Activated CD4-positive, alpha-beta T cell treated with anti-CD3 and anti-CD28 coated beads for 36 hours (primary cell): ENCODE measurements at regions of chr5 and their contacts with region 1.

Region 1: GRCh38 chr5:40223884-40224402 is 455.8 kb upstream of the PTGER4 start:
- DNase-seq: peak; percentile 63
- ATAC-seq: peak; percentile 87
- H3K4me3 Mint-ChIP-seq: peak overlapping the region; percentile 50
- H3K27ac Mint-ChIP-seq: peak overlapping the region; percentile 94
- H3K4me1 Mint-ChIP-seq: peaks cover 64% of the 10 kb centered on the region
- H3K27me3 Mint-ChIP-seq: no peaks in the 10 kb centered on the region

Region 2: DNA sequence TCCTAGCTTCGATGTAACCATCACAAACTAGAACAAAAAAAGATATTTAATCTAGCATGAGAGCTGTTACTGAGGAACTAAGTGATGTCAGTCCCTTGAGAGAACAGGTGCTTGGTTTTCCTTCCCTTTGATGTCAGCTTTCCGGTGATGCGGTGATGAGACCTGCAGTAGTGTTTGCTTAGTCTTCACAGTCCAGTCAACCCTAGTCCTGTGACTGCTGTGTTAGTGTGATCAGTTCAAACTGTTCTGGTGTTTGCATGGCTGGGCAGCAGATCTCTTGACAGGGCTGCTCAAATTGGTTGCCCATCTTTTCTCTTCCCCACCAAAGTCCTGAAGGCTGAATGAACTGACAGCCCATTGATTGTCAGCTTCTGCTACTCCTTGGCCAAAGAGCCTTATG is 190.5 kb before region 1 on chr5:
- CTCF ChIA-PET with region 1: no interaction called
- POLR2A ChIA-PET with region 1: no interaction called
- intact Hi-C with region 1: no loop called
- DNase-seq: peak; percentile 19
- ATAC-seq: peak; percentile 71
- H3K4me3 Mint-ChIP-seq: no peak overlapping the region
- H3K27ac Mint-ChIP-seq: no peak overlapping the region
- H3K4me1 Mint-ChIP-seq: peaks cover 12% of the 10 kb centered on the region
- H3K27me3 Mint-ChIP-seq: peaks cover 3% of the 10 kb centered on the region

Region 3: GRCh38 chr5:40078896-40079575 is 144.9 kb before region 1 on chr5:
- CTCF ChIA-PET with region 1: no interaction called
- POLR2A ChIA-PET with region 1: no interaction called
- intact Hi-C with region 1: no loop called
- DNase-seq: no peak
- ATAC-seq: no peak
- H3K4me3 Mint-ChIP-seq: no peak overlapping the region
- H3K27ac Mint-ChIP-seq: no peak overlapping the region
- H3K4me1 Mint-ChIP-seq: no peaks in the 10 kb centered on the region
- H3K27me3 Mint-ChIP-seq: peaks cover 2% of the 10 kb centered on the region

Region 4: GRCh38 chr5:40206030-40206429 is 17.9 kb before region 1 on chr5:
- CTCF ChIA-PET with region 1: interaction called, 5 read pairs
- POLR2A ChIA-PET with region 1: interaction called, 6 read pairs
- intact Hi-C with region 1: loop called (anchors 1 to 2 kb)
- DNase-seq: peak; percentile 16
- ATAC-seq: peak; percentile 76
- H3K4me3 Mint-ChIP-seq: no peak overlapping the region
- H3K27ac Mint-ChIP-seq: peak overlapping the region; percentile 25
- H3K4me1 Mint-ChIP-seq: peaks cover 40% of the 10 kb centered on the region
- H3K27me3 Mint-ChIP-seq: no peaks in the 10 kb centered on the region

Region 5: GRCh38 chr5:40333459-40334244 is 109.7 kb after region 1 on chr5:
- CTCF ChIA-PET with region 1: no interaction called
- POLR2A ChIA-PET with region 1: no interaction called
- intact Hi-C with region 1: loop called in 1 of 2 experiments (anchors 2 kb)
- DNase-seq: peak; percentile 49
- ATAC-seq: peak; percentile 96
- H3K4me3 Mint-ChIP-seq: no peak overlapping the region
- H3K27ac Mint-ChIP-seq: no peak overlapping the region
- H3K4me1 Mint-ChIP-seq: peaks cover 41% of the 10 kb centered on the region
- H3K27me3 Mint-ChIP-seq: no peaks in the 10 kb centered on the region

Region 6: DNA sequence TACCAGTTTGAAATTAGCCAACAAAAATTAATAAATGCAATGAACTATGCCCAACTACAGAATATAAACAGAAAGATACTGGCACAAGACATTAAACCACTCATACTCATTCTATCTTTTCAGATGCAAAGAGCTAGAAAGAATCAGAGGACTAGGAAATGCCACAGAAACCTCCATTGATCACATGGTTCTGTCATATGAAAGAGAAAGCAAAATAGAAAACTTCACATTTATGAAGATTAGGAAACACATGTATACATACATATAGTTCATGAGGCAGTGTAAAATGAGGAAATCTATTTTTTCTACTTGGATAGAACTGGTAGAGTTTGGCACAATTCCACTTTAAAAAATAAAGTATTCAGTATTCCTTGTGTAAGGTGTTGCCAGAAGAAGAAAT is 180.7 kb after region 1 on chr5:
- CTCF ChIA-PET with region 1: interaction called, 3 read pairs
- POLR2A ChIA-PET with region 1: interaction called, 12 read pairs
- intact Hi-C with region 1: no loop called
- DNase-seq: no peak
- ATAC-seq: peak; percentile 28
- H3K4me3 Mint-ChIP-seq: peak overlapping the region; percentile 18
- H3K27ac Mint-ChIP-seq: peak overlapping the region; percentile 99
- H3K4me1 Mint-ChIP-seq: peaks cover 94% of the 10 kb centered on the region
- H3K27me3 Mint-ChIP-seq: no peaks in the 10 kb centered on the region

Region 7: DNA sequence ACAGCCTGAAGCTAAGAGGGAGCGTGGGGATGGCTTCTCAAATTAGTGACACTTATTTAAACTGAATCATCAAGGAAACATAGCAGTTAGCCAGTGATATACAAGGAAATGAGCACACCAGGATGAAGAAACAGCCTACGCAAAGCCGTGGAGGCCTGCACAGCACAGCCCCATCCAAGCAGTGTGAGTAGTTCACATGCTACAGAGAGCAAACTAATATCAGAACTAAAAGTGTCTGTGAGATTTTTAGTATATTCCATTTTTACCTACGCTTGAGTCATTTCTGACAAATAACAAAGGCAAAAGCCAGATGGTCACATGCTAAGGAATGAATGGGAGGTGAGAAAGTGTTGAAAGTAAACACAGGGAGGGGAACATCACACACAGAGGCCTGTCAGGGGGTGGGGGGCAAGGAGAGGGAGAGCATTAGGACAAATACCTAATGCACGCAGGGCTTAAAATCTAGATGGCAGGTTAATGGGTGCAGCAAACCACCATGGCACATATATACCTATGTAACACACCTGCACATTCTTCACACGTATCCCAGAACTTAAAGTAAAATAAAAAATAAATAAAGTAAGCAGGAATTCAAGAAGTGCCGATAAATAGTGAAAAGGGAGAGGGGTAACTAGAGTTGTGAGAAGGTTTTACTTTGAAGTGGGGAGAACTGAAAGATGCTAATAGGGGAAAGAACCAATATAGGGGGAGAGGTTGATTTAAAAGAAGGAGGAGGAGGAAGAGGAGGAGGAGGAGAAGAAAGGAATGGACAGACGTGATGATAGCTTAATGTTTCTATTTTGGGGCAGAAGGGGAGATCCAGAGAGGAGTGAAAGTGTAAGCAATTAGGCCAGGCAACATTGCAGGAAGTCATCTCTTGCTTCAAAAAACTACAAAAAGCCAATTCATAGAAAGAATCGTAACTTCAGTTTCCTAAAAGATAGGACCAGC is 354.8 kb after region 1 on chr5:
- CTCF ChIA-PET with region 1: no interaction called
- POLR2A ChIA-PET with region 1: no interaction called
- intact Hi-C with region 1: loop called (anchors 1 to 5 kb)
- DNase-seq: peak; percentile 84
- ATAC-seq: peak; percentile 95
- H3K4me3 Mint-ChIP-seq: peak overlapping the region; percentile 49
- H3K27ac Mint-ChIP-seq: peak overlapping the region; percentile 72
- H3K4me1 Mint-ChIP-seq: peaks cover 44% of the 10 kb centered on the region
- H3K27me3 Mint-ChIP-seq: no peaks in the 10 kb centered on the region